SK-MEL-5 (cell line): ENCODE measurements at regions of chr16 and their contacts with region 1.

Region 1: GRCh38 chr16:22188595-22189442 is 17.3 kb upstream of the EEF2K start:
- DNase-seq: peak; percentile 84

Region 2: GRCh38 chr16:22081050-22081449 is 107.8 kb before region 1 on chr16:
- in situ Hi-C with region 1: loop called (anchors 10 kb)
- DNase-seq: no peak

Region 3: DNA sequence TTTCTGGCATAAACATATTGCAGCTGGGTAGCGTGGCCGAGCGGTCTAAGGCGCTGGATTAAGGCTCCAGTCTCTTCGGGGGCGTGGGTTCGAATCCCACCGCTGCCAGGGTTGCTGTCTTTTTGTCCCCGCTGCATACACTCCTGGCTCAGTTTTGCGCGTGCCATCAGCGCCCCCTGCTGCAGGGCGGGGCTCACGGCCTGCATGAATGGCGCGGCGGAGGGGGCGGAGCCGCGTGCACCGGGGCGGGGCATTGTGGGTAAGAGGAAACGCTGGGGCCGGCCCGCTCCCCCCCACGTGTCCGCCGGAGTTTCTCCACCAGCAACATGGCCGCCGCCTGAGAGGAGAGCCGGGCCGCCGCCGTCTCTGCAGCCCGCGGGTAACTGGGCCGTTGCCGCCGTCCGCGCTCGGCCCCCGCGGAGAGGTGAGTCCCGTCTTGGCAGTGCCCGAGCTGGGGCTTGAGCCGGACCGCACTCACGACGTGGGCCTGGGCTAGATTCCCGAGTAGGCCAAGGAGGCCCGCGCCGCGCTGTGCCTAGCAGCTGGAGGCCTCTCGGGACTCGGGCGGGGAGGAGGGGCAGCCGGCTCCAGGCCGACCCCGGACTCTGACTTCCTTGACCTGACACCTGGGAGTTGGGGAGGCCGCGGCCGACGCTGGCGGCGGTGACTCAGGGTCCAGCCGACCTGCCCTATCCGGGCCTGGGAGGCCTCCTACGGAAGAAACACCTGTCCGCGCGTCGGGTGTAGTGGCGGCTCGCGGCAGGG is 108.5 kb after region 1 on chr16 and contains the start of gene POLR3E:
- in situ Hi-C with region 1: no loop called
- DNase-seq: peak; percentile 96
- total RNA-seq, gene POLR3E: 39.3 and 40.4 TPM in 2 replicates